ENCODE measurements at regions of chr9 and their contacts with region 1.

Region 1: DNA sequence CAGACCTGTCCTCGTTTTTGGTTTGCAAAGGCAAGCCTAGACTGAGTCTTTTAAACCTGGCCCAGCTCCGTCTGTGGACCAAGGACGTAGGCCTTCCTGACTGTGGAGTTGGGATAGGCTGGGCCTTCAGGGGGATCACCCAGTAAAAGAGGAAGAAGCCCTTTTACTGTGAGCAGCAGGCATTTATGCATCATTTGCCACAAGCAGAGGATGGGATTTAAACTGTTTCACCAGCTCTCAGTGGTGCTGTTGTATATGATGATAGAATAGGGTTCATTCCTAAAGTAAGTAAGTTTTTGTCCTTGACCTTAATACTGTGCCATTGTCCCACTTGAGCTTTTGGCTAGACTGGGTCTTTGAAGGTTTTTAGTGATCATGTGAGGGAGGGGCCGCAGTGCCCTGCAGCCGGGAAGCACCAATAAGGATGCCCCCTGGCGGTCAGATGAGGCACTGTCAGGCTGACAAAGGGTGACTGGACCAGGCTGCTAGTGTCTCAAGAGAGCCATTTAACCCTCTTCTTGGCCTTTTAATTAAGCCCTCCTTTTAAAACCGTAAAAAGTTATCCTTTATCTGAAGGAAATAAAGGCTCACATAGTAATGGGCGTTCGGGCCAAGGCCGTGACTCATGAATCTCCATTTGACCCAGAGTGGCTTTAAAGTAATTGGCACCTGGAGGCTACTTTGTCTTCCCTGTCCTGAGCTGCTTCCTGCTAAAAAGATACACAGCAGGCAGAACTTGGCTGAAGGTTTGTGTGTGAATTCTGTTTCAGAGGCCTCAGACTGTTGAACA is 74.0 kb downstream of the UBAP1 start:
- DNase-seq: peak; percentile 35 to 82 (median 70)
- H3K4me3 ChIP-seq: peak overlapping the region in 2 of 59 donors; percentile 8 to 24
- H3K27ac ChIP-seq: peak overlapping the region in 53 of 59 donors; percentile 7 to 85 (median 63)
- H3K27me3 ChIP-seq: no peaks in the 10 kb centered on the region
- CTCF ChIP-seq: peak in 55 of 56 donors; percentile 61 to 99 (median 91)

Region 2: DNA sequence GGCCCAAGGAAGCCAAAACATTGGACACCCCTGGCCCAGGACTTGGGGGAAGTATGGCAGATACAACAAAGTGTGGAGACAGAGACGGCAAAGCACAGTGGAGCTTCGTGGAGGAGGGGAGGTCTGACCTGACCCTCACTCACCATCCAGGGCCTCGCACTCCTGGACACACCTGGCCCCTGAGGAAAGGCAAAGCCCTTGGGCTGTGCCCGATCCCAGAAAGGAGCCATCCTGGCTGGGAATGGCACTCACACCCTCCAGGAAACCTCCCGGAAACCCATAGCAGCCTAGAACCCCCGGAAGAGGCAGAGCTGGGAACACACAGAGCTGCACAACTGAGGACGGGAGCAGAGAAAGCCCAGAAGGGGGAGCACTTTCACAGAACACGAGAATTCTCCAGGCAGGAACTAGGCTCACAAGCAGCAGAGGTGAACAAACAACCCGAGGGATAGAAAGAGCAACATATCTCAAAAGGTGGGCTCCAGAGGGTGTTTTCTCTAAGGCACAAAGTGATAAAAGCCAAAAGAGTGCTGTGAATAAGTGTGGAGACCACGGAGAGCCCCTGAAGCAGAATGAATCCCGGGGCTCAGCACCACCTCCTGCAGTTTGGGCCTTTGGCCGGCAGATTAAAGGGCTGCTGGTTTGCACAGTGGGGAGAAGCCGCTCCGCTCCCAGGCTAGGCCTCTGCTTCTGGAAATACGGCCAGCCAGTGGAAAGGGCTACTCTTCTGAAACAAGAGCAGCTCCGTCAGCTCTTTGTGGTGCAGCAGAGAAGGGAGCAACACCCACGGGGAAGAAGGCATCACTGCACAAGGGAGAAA is 327.7 kb before region 1 on chr9:
- intact Hi-C with region 1: loop called in 1 of 2 experiments (anchors 2 kb)
- DNase-seq: peak in 8 of 10 donors; percentile 57 to 82 (median 66)
- H3K4me3 ChIP-seq: no peak overlapping the region
- H3K27ac ChIP-seq: peak overlapping the region in 58 of 59 donors; percentile 16 to 89 (median 75)
- H3K27me3 ChIP-seq: no peaks in the 10 kb centered on the region
- CTCF ChIP-seq: peak; percentile 30 to 81 (median 68)

Region 3: DNA sequence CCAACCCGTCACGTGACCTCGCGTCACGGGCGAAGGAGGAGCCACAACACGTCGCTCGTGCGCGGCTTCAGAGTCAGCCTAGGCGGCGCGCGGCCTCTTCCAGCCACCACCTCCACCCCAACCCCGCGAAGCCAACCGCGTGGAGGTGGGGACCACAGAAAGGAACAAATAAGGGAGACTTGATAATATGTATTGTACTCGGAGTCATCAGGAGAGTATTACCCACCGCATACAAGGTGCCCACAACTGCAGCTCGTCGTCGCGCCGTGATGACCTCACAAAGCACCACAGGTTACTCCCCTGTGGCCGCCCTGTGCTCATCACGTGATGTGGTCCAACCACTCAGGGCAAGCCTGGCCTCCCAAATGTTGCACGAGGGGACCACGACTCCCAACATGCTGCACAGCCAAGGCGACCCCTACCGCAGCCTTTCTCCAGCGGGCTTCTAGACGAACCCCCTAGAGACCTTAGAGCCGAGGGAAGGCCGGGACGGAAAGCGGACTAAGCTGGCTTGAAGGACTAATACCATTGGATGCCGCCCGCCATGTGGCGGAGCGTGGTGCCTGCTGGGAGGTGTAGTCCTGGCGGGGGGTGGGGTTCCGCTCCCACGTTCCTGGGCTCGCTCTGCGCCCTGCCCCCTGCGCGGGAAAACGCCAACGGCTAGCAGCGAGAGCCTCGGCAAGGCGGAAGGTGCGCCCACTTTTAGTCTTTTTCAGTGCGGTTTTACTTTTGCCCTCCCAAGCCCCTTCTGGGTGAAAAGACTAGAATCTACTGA is 203.8 kb before region 1 on chr9:
- intact Hi-C with region 1: loop called in 1 of 2 experiments (anchors 5 kb)
- DNase-seq: peak; percentile 98 to 99 (median 98)
- H3K4me3 ChIP-seq: peak overlapping the region; percentile 71 to 100 (median 98)
- H3K27ac ChIP-seq: peak overlapping the region; percentile 67 to 100 (median 97)
- H3K27me3 ChIP-seq: no peaks in the 10 kb centered on the region
- CTCF ChIP-seq: peak in 36 of 56 donors; percentile 7 to 62 (median 25)

Region 4: DNA sequence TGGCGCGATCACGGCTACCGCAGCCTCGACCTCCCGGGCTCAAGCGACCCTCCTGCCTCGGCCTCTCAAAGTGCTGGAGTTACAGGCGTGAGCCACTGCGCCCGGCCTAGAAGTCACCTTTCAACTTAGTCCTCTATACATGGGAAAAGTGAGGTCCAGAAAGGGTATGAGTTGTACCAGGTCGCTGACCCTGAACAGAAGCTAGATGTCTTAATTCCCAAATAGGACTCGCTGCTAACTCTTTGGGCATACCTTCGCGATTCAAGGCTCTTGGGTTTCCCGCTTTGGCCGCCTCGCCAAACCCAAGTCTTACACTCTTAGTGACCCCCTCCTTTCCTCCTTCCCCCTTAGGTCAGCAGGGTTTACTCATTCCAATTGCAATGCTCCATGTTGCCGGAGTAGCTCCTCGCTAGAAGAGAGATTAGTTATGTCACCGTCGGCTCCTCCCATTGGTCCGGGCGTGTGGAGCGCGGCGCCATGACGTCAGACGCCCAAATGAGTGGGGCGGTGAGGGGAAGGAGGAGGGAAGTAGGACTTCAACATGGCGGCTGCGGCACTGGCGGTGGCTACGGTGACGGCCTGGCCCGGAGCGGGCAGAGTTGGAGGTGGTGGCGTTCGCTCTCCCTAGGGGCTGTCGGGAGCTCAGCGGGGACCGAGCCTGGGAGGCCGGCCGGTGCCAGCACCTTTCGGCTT is 74.2 kb before region 1 on chr9 and contains the start of gene UBAP1:
- intact Hi-C with region 1: loop called (anchors 2 to 10 kb)
- DNase-seq: peak; percentile 91 to 98 (median 97)
- H3K4me3 ChIP-seq: peak within 1 kb of the TSS; percentile 57 to 98 (median 83)
- H3K27ac ChIP-seq: peak within 1 kb of the TSS; percentile 26 to 97 (median 91)
- H3K27me3 ChIP-seq: no peaks in the 10 kb centered on the region
- CTCF ChIP-seq: peak in 31 of 56 donors; percentile 3 to 40 (median 23)
- total RNA-seq, gene UBAP1: 48.3 to 81.3 (median 63.1) TPM

Region 5: DNA sequence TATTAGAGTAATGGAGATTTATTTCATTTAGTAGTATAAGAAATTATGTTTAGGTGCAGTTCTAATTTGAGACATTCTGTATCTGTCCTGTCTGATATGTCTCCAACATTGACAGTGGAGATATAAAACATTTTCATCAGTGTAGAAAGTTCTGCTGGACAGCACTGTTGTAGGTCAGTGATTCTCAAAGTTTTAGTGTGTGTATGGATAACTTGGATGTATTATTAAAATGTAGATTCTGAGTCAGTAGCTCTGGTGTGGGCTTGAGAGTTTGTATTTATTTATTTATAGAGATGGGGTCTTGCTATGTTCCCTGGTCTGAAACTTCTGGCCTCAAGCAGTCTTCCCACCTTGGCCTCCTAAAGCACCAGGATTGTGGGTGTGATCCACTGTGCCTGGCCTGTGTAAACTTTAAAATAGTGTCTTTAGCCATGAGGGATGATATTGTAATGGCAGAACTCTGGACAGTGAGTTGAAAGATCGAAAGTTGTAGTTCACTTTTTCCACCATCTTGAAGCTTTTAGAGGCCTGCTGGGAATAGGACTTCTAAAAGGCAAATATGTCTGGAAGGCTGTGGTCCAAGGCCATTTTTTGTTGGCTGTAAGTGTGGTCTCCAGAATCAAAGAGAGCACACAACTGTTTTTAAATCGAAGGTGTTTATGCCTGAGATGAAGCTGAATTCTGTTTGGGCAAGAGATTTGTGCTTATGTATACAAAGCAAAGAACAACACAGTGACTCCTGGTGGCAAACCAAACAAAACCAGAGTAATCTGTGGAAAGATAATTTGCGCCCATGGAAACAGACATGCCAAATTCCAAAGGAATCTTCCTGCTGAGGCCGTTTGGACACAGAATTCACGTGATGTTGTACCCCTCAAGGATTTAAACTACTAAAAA is 61.6 kb before region 1 on chr9:
- intact Hi-C with region 1: no loop called
- DNase-seq: no peak
- H3K4me3 ChIP-seq: no peak overlapping the region
- H3K27ac ChIP-seq: peak overlapping the region in 9 of 59 donors; percentile 7 to 53 (median 15)
- H3K27me3 ChIP-seq: no peaks in the 10 kb centered on the region
- CTCF ChIP-seq: peak in 5 of 56 donors; percentile 8 to 30 (median 19)

Region 6: DNA sequence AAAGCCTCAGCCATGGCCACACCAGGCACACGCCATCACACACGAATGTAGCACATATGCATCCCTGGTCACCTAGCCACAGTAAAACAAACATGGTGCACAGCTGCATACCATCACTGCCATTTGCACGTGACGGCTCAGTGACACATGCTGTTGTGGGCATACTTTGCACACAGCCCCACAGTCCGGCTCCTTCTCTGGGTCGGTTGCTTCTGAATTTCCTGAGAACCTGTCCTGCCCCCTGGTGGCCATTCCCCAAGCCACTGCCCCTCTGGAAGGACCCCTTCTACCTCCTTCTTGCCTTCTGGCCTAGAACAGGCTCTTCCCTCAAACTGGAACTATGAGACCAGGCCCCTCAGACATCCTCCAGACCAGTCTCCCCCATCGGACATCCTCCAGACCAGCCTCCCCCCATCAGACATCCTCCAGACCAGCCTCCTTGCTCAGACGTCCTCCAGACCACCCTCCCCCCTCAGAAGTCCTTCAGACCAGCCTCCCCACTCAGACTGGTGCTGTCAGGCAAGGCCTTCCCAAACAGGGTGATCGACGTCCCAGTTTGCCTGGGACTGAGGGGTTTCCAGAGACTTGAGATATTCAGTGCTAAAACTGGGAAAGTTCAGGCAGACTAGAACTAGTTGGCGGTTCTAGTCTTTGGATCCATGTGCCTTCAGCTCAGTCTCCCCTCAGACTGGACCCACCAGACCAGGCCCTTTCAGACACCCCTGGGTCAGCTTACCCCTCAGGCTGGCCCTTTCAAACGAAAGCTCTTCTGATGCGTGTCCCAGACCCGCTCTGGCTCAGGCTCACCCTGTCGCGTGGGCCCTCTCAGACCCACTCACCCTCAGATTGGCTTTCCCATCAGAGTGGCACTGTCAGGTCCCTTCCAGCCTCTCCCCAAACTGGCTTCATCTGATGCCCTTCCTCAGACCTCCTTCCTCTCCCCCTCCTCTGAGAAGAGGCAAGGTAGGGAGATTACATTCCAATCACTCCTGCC is 294.3 kb after region 1 on chr9:
- intact Hi-C with region 1: no loop called
- DNase-seq: peak; percentile 70 to 84 (median 78)
- H3K4me3 ChIP-seq: no peak overlapping the region
- H3K27ac ChIP-seq: peak overlapping the region in 26 of 59 donors; percentile 1 to 71 (median 32)
- H3K27me3 ChIP-seq: no peaks in the 10 kb centered on the region
- CTCF ChIP-seq: peak; percentile 31 to 92 (median 82)